ENCODE measurements at regions of chr17 and their contacts with region 1.

Region 1: DNA sequence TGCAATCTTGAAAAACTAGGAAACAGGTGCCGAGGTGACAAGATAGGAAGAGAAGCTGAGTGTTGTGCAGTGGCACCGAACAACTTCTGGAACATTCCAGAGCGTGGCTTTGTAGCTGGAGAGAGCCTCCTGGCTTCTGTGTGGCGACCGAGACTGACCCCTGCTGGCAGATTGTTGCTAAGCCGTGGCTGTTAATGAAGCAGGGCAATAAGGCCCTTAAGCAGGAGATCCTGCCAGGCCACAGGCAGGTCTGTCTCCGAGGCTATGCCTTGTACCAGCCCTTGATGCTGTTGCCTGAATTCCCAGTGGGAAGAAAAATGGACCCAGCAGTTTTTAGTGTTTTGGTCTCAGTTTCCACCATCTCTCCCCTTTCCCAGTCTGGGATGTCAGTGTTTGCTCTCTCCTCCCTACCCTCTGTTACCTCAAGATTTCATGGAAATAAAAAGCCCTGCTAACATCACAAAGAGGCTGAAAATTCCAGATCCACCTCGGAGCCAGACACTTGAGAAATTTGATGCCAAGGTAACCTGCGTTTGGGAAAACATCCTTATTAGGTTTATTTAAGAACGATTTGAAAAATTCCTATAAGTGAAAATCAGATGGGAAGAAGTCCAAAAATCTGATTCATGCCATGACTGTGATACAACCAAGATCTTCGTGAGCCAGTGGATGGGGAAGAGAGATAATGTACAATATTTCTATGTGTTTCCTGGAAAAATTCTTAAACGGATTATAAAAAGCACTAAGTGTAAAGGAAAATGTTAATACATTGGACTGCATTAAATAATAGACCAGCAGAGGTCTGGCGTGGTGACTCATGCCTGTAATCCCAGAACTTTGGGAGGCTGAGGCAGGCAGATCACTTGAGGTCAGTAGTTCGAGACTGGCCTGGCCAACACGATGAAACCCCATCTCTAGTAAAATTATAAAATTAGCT is 265.1 kb downstream of the PRKCA start:
- DNase-seq: peak; percentile 71
- H3K4me3 ChIP-seq: peak overlapping the region in 1 of 2 experiments; percentile 3; a peak in 1 of 4 replicates
- H3K27ac ChIP-seq: peak overlapping the region; percentile 77 to 97
- H3K4me1 ChIP-seq: peaks cover 22 to 31% of the 10 kb centered on the region in 2 experiments
- H3K27me3 ChIP-seq: no peaks in the 10 kb centered on the region
- CTCF ChIP-seq: peak; percentile 100
- EP300 ChIP-seq: peak; percentile 80 to 99
- RAD21 ChIP-seq: peak; percentile 91

Region 2: DNA sequence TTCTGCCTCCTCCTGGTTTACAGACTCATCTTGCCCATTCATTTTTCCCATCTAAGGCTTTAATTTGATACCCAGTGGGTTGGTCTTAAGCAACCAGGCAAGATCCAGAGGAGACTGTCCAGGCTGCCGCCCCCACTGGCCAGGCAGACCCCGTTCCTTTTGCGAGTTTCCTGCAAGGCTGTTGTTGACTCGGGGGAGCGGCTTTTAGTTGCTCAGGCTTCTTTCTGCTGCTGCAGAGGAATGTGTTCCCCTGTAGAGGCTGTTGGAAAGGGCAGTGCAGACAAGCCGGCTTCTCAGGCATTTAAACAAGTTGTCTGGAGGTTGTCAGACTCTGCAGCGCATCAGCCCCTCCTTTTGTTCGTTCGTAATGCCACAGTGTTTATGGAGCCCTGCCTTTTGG is 33.9 kb before region 1 on chr17:
- CTCF ChIA-PET with region 1: no interaction called
- POLR2A ChIA-PET with region 1: no interaction called
- DNase-seq: peak; percentile 34
- H3K4me3 ChIP-seq: no peak overlapping the region
- H3K27ac ChIP-seq: peak overlapping the region; percentile 5 to 18; a peak in 2 of 4 replicates
- H3K4me1 ChIP-seq: peaks cover 20 to 26% of the 10 kb centered on the region in 2 experiments; a peak in 3 of 4 replicates
- H3K27me3 ChIP-seq: no peaks in the 10 kb centered on the region
- CTCF ChIP-seq: peak; percentile 12; the same call in 1 of the 2 replicates
- EP300 ChIP-seq: no peak; a peak in 1 of 4 replicates
- RAD21 ChIP-seq: peak; percentile 61

Region 3: DNA sequence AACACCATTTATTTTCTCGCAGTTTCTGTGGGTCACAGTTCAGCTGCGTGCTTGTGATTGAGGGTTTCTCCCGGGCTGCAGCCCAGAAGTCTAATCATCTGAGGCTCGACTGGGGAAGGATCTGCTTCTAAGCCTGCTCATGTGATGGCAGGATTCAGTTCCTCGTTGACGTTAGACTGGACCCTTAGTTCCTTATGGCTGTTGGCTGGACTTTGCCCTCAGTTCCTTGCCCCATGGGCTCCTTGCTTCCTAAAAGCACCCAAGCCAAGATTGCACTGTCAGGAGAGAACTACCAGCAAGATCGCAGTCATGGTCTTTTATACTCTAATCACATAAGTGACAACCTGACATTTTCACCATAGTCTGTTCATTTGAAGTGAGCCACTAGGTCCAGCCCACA is 15.1 kb before region 1 on chr17:
- CTCF ChIA-PET with region 1: interaction called, 11 read pairs
- POLR2A ChIA-PET with region 1: no interaction called
- DNase-seq: no peak
- H3K4me3 ChIP-seq: no peak overlapping the region
- H3K27ac ChIP-seq: no peak overlapping the region
- H3K4me1 ChIP-seq: peaks cover 14 to 28% of the 10 kb centered on the region in 2 experiments; a peak in 3 of 4 replicates
- H3K27me3 ChIP-seq: no peaks in the 10 kb centered on the region
- CTCF ChIP-seq: no peak
- EP300 ChIP-seq: no peak
- RAD21 ChIP-seq: no peak